Cardiac septum (tissue), 1 donor: ENCODE measurements at regions of chr4 and their contacts with region 1.

Region 1: DNA sequence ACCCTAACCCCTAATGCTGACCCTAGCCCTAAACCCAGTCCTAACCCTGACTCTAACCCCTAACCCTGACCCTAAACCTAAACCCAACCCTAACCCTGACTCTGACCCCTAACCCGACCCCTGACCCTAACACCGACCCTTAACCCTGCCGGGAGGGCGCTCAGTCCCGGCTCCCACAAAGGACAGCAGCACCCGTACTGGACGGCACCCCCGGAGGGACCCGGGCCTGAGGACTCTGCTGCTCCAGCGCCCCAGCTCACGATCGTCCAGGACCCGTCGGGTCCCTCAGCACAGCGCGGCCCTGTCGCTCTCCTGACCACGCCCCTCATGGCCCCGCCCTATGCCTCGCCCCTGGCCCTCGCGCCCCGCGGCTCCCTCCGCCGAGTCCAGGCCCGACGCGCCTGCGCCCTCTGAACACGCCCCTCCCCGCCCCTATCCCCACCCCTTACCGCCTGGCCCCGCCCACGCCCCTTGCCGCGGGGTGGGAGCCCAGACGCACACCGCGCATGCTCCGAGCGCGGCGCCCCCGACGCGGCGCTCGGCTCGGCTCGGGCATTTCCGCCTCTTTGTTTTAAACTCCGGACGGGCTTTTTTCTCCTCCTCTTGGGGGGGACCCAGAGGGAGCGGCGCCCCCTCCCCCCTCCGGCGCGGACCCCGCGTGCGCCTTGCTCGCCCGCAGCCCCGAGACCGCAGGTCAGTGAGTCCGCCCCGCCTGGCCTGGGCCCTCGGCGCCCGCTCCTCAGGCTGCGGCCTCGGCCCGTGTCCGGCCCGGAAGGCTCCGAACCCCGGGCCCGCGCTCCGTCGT is at the start of gene PCGF3:
- DNase-seq: peak; percentile 98
- total RNA-seq, gene PCGF3: 24.3 TPM

Region 2: DNA sequence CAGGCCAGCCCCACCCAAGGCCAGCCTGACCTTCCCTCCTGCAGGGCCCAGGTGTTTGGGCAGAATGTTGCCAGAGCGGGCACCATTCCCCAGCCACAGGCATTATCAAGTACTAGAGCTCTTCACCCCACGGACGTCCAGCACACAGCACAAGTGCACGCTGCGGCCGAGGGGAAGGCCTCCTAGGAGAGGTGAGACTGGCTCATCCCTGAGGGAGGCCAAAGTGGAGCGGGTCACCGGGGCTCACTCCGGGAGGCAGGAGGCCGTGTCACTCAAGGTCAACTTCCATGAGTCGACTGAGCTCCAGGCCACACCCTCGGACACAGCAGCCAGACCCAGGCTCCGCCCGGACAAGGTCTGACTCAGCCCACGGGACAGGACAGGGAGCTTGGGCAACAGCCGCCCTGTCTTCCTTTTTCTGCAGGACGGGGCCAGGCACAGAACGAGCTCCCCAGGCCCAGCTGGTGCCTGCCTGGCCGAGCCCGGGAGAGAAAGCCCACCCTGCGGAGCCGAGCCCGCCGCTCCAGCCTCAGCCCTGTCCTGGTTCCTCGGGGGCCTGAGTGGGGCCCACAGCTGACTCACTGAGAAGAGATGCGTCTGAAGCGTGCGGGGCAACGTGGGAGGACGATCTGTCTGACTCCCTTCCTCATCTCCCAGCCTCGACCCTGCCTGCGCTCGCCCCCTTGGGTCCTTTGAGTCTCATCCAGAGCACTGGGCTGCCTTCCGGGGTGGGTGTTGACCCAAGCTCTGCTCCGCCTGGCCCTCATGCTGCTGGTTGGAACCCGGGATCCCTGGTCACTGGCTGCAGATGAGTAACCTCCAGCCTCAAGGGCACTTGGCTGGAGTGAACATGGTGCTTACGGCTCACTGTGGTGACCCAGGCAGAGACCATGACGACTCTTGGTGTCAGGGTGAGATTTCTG is 18.2 kb before region 1 on chr4:
- intact Hi-C with region 1: loop called (anchors 2 kb)
- DNase-seq: peak; percentile 97